H1 (cell line): ENCODE measurements at regions of chr11 and their contacts with region 1.

Region 1: DNA sequence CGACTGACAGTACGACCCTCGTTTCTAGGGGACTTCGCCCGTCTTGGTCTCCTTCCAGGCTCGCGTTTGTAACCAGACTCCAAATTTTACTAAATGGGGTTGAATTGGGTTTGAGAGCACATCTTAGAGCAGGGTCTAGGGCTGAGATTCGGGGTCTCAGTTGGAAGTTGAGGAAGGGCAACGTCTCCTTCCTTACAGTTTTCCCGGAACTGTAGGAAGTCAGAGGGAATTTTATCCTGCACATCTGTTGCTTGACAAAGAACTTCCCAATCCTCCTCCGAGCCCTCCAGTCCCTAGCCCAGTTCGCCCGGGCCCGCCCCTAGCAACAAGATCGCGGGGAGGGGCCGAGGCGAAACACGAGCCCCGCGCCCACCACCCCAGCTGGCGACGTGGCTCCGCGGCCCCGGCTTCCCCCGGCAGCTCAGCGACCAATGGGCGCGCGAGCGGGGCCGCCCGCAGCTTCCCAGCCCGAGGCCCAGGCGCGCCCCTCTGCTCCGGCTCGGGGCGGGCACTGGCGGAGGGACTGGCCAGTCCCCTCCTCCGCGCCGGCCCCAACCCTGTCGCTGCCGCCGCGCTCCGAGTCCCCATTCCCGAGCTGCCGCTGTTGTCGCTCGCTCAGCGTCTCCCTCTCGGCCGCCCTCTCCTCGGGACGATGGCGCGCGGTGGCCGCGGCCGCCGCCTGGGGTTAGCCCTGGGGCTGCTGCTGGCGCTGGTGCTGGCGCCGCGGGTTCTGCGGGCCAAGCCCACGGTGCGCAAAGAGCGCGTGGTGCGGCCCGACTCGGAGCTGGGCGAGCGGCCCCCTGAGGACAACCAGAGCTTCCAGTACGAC is at the start of gene RCN1:
- DNase-seq: peak; percentile 47 to 85
- H3K4me3 ChIP-seq: peak within 1 kb of the TSS; percentile 58 to 86 (median 67)
- H3K27ac ChIP-seq: peak within 1 kb of the TSS; percentile 60; the same call in 1 of the 2 replicates
- H3K4me1 ChIP-seq: peaks cover 0 to 13% (median 3%) of the 10 kb centered on the region in 4 experiments; a peak in 4 of 7 replicates
- H3K27me3 ChIP-seq: no peaks in the 10 kb centered on the region; a peak in 2 of 7 replicates
- CTCF ChIP-seq: no peak
- EP300 ChIP-seq: no peak; a peak in 1 of 3 replicates
- POLR2A ChIP-seq: peak; percentile 70 to 74
- RAD21 ChIP-seq: no peak
- total RNA-seq, gene RCN1: 119 and 123 TPM in 2 replicates

Region 2: DNA sequence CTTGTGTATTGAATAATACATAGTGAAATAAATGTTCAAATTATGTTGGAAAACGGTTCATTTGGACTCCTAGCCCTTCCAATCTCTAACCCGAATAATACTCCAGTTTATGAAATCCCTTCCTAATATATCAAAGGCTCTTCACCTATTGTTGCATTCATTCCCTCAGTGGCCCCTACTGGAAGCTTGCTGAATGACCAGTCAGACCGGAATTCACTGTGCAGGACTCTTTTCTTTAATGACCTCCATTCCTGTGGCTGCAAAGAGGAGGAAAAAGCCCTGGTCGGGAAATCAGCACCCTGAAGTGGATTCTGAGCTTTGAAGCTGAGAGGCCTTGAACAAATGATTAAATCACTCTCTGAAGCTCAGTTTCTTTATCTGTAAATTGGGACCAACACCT is 18.9 kb before region 1 on chr11:
- CTCF ChIA-PET with region 1: interaction called, 4 read pairs
- POLR2A ChIA-PET with region 1: interaction called, 10 read pairs
- DNase-seq: no peak
- H3K4me3 ChIP-seq: no peak overlapping the region
- H3K27ac ChIP-seq: no peak overlapping the region
- H3K4me1 ChIP-seq: peaks cover 4 to 13% (median 9%) of the 10 kb centered on the region in 4 experiments; a peak in 6 of 7 replicates
- H3K27me3 ChIP-seq: no peaks in the 10 kb centered on the region
- CTCF ChIP-seq: peak in 2 of 3 experiments; percentile 35 to 58; a peak in 3 of 4 replicates
- EP300 ChIP-seq: no peak
- POLR2A ChIP-seq: no peak
- RAD21 ChIP-seq: peak; percentile 19 to 35; a peak in 2 of 4 replicates